CD4-positive, alpha-beta T cell (primary cell): ENCODE measurements at regions of chr2 and their contacts with region 1.

Region 1: DNA sequence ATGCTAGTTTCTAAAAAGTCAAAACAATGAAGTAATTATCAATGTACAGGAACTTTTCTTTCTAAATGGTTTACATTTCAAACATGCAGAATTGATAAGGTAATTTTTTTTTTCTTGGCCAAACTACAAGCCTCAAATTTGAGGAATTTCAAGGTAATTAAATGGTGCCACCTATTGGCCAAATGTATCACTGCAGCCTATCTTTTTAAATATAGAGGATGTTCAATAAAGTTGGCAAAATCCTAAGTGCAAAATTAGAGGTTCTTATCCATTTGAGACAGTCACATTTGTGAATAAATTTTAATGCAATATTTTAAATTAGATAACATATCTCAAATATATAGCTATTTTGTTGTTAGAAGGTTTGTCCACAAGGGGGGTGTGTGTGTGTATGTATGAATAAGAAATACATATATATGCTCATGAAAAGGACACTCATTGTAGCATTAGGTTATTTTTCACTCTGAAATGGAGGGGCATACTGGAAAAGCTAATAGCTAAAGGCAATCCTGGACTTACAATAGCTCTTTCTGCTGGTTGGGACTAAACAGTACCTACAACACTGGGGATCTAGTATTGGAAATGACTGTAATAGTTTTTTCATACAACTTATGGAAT is 26.2 kb downstream of the MMADHC start:
- DNase-seq: peak in 6 of 14 experiments; percentile 3 to 61 (median 46)
- ATAC-seq: no peak
- H3K4me3 ChIP-seq: no peak overlapping the region
- H3K4me3 Mint-ChIP-seq: no peak overlapping the region
- H3K27ac ChIP-seq: no peak overlapping the region
- H3K27ac Mint-ChIP-seq: no peak overlapping the region
- H3K4me1 ChIP-seq: no peaks in the 10 kb centered on the region
- H3K4me1 Mint-ChIP-seq: no peaks in the 10 kb centered on the region
- H3K27me3 ChIP-seq: no peaks in the 10 kb centered on the region
- H3K27me3 Mint-ChIP-seq: no peaks in the 10 kb centered on the region
- CTCF ChIP-seq: peak; percentile 97

Region 2: DNA sequence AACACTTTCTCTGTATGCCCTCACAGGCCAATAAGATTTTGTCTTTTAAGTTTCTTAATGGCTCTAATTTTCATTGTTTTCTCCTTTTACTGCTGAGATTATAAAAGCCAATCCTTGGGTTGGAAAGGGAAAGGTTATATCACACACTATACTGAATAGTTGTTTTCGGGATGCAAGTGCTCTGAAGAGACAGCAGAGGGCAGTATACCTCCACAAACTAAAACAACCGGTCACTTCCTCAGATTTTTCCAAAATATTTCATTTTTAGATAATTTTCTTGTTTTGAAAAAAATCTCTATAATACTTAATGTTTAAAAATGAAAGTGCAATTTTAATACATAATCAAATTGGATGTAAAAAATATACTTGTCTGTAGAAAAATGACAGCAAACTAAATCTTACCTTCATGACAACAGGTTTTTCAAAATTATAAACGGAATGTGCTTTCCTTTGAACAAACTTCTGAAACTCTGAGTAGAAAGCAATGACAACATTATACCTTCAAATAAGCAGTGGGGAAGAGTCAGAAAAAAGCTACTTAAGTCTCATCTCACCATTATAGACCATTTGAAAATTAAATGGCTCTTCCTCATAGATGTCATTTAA is 1623.6 kb before region 1 on chr2:
- CTCF ChIA-PET with region 1: no interaction called
- POLR2A ChIA-PET with region 1: no interaction called
- intact Hi-C with region 1: loop called (anchors 1 to 10 kb)
- DNase-seq: peak in 3 of 14 experiments; percentile 35 to 57 (median 43)
- ATAC-seq: peak; percentile 68
- H3K4me3 ChIP-seq: no peak overlapping the region
- H3K4me3 Mint-ChIP-seq: no peak overlapping the region
- H3K27ac ChIP-seq: no peak overlapping the region
- H3K27ac Mint-ChIP-seq: no peak overlapping the region
- H3K4me1 ChIP-seq: no peaks in the 10 kb centered on the region
- H3K4me1 Mint-ChIP-seq: no peaks in the 10 kb centered on the region
- H3K27me3 ChIP-seq: no peaks in the 10 kb centered on the region
- H3K27me3 Mint-ChIP-seq: no peaks in the 10 kb centered on the region
- CTCF ChIP-seq: peak; percentile 97

Region 3: GRCh38 chr2:147989809-147990403 is 1571.5 kb before region 1 on chr2:
- CTCF ChIA-PET with region 1: no interaction called
- POLR2A ChIA-PET with region 1: no interaction called
- intact Hi-C with region 1: loop called in 1 of 2 experiments (anchors 2 kb)
- DNase-seq: peak in 7 of 14 experiments; percentile 5 to 73 (median 44)
- ATAC-seq: peak; percentile 95
- H3K4me3 ChIP-seq: no peak overlapping the region
- H3K4me3 Mint-ChIP-seq: no peak overlapping the region
- H3K27ac ChIP-seq: no peak overlapping the region
- H3K27ac Mint-ChIP-seq: peak overlapping the region; percentile 25
- H3K4me1 ChIP-seq: no peaks in the 10 kb centered on the region
- H3K4me1 Mint-ChIP-seq: peaks cover 38% of the 10 kb centered on the region
- H3K27me3 ChIP-seq: no peaks in the 10 kb centered on the region
- H3K27me3 Mint-ChIP-seq: no peaks in the 10 kb centered on the region
- CTCF ChIP-seq: peak; percentile 97

Region 4: GRCh38 chr2:149017116-149017985 is 544.1 kb before region 1 on chr2:
- CTCF ChIA-PET with region 1: interaction called, 9 read pairs
- POLR2A ChIA-PET with region 1: interaction called, 6 read pairs
- intact Hi-C with region 1: loop called (anchors 1 kb)
- DNase-seq: peak; percentile 48 to 82 (median 66)
- ATAC-seq: peak; percentile 73
- H3K4me3 ChIP-seq: no peak overlapping the region
- H3K4me3 Mint-ChIP-seq: no peak overlapping the region
- H3K27ac ChIP-seq: no peak overlapping the region
- H3K27ac Mint-ChIP-seq: no peak overlapping the region
- H3K4me1 ChIP-seq: peaks cover 3% of the 10 kb centered on the region
- H3K4me1 Mint-ChIP-seq: no peaks in the 10 kb centered on the region
- H3K27me3 ChIP-seq: no peaks in the 10 kb centered on the region
- H3K27me3 Mint-ChIP-seq: no peaks in the 10 kb centered on the region
- CTCF ChIP-seq: peak; percentile 81

Region 5: GRCh38 chr2:149033716-149034115 is 527.7 kb before region 1 on chr2:
- CTCF ChIA-PET with region 1: no interaction called
- POLR2A ChIA-PET with region 1: no interaction called
- intact Hi-C with region 1: loop called in 1 of 2 experiments (anchors 5 kb)
- DNase-seq: no peak
- ATAC-seq: no peak
- H3K4me3 ChIP-seq: no peak overlapping the region
- H3K4me3 Mint-ChIP-seq: no peak overlapping the region
- H3K27ac ChIP-seq: no peak overlapping the region
- H3K27ac Mint-ChIP-seq: no peak overlapping the region
- H3K4me1 ChIP-seq: peaks cover 2% of the 10 kb centered on the region
- H3K4me1 Mint-ChIP-seq: no peaks in the 10 kb centered on the region
- H3K27me3 ChIP-seq: peaks cover 11 to 13% of the 10 kb centered on the region in 2 experiments
- H3K27me3 Mint-ChIP-seq: peaks cover 42% of the 10 kb centered on the region
- CTCF ChIP-seq: no peak

Region 6: GRCh38 chr2:149271575-149271974 is 289.8 kb before region 1 on chr2:
- CTCF ChIA-PET with region 1: no interaction called
- POLR2A ChIA-PET with region 1: no interaction called
- intact Hi-C with region 1: no loop called
- DNase-seq: no peak
- ATAC-seq: no peak
- H3K4me3 ChIP-seq: no peak overlapping the region
- H3K4me3 Mint-ChIP-seq: no peak overlapping the region
- H3K27ac ChIP-seq: no peak overlapping the region
- H3K27ac Mint-ChIP-seq: no peak overlapping the region
- H3K4me1 ChIP-seq: no peaks in the 10 kb centered on the region
- H3K4me1 Mint-ChIP-seq: no peaks in the 10 kb centered on the region
- H3K27me3 ChIP-seq: no peaks in the 10 kb centered on the region
- H3K27me3 Mint-ChIP-seq: no peaks in the 10 kb centered on the region
- CTCF ChIP-seq: no peak

Region 7: GRCh38 chr2:149729575-149729974 is 168.2 kb after region 1 on chr2:
- CTCF ChIA-PET with region 1: no interaction called
- POLR2A ChIA-PET with region 1: no interaction called
- intact Hi-C with region 1: no loop called
- DNase-seq: no peak
- ATAC-seq: no peak
- H3K4me3 ChIP-seq: no peak overlapping the region
- H3K4me3 Mint-ChIP-seq: no peak overlapping the region
- H3K27ac ChIP-seq: no peak overlapping the region
- H3K27ac Mint-ChIP-seq: no peak overlapping the region
- H3K4me1 ChIP-seq: no peaks in the 10 kb centered on the region
- H3K4me1 Mint-ChIP-seq: no peaks in the 10 kb centered on the region
- H3K27me3 ChIP-seq: peaks cover 0 to 3% of the 10 kb centered on the region in 2 experiments
- H3K27me3 Mint-ChIP-seq: peaks cover 16% of the 10 kb centered on the region
- CTCF ChIP-seq: no peak